Gastrocnemius medialis (tissue), 4 donors: ENCODE measurements at regions of chr12 and their contacts with region 1.

Region 1: GRCh38 chr12:64181504-64182291 is 40.4 kb downstream of the KICS2 start:
- DNase-seq: peak; percentile 33
- ATAC-seq: peak; percentile 88
- H3K4me3 ChIP-seq: no peak overlapping the region
- H3K27ac ChIP-seq: peak overlapping the region in 1 of 4 donors; percentile 30
- H3K4me1 ChIP-seq: peaks cover 0 to 16% of the 10 kb centered on the region in 2 donors
- H3K27me3 ChIP-seq: no peaks in the 10 kb centered on the region
- CTCF ChIP-seq: peak in 4 of 5 experiments; percentile 33 to 63 (median 48)
- POLR2A ChIP-seq: no peak

Region 2: GRCh38 chr12:64088431-64089349 is 93.0 kb before region 1 on chr12:
- in situ Hi-C with region 1: no loop called
- intact Hi-C with region 1: loop called (anchors 5 kb)
- DNase-seq: peak; percentile 48 to 69
- ATAC-seq: peak; percentile 87 to 91
- H3K4me3 ChIP-seq: peak overlapping the region in 1 of 4 donors; percentile 21
- H3K27ac ChIP-seq: peak overlapping the region; percentile 44 to 67 (median 52)
- H3K4me1 ChIP-seq: peaks cover 15 to 25% of the 10 kb centered on the region in 2 donors
- H3K27me3 ChIP-seq: no peaks in the 10 kb centered on the region
- CTCF ChIP-seq: no peak
- POLR2A ChIP-seq: no peak